CD4-positive, alpha-beta T cell (primary cell): ENCODE measurements at regions of chr12 and their contacts with region 1.

Region 1: DNA sequence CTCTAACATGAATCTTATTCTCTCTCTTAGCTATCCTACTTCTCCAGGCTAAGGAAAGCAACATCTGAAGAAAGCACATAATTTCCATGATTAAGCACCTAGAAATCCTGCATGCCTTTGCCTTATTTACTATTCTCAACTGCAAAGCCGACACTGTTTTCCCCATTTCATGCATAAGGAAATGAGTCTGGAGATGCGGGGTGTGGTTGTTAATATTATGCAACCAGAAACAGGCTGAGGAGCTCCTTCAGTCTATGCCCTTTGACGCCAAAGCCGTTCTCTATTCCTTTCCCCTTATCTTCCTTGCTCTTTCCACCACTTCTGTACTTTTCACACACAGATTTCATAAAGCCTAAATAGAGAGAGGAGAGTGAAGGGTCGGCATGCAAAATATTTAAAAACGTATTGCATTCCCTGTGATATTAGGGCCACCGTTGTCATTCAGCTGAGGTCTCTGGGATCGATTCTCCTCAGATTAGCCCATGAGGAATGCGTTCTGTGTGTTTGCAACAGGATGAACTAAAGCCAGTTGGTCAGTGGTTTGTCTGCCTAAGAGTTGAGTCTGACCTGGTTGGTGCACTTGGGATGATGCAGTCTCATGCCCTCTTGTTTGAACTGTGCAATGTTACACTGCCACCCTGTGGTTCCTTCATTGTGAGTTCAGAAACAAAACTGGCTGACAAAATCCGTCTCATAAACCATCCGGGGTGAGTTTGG is 53.1 kb upstream of the PLEKHG7 start:
- DNase-seq: peak; percentile 33 to 85 (median 50)
- ATAC-seq: peak; percentile 91
- H3K4me3 ChIP-seq: no peak overlapping the region
- H3K4me3 Mint-ChIP-seq: no peak overlapping the region
- H3K27ac ChIP-seq: no peak overlapping the region
- H3K27ac Mint-ChIP-seq: no peak overlapping the region
- H3K4me1 ChIP-seq: peaks cover 3% of the 10 kb centered on the region
- H3K4me1 Mint-ChIP-seq: no peaks in the 10 kb centered on the region
- H3K27me3 ChIP-seq: no peaks in the 10 kb centered on the region
- H3K27me3 Mint-ChIP-seq: no peaks in the 10 kb centered on the region
- CTCF ChIP-seq: peak; percentile 81

Region 2: DNA sequence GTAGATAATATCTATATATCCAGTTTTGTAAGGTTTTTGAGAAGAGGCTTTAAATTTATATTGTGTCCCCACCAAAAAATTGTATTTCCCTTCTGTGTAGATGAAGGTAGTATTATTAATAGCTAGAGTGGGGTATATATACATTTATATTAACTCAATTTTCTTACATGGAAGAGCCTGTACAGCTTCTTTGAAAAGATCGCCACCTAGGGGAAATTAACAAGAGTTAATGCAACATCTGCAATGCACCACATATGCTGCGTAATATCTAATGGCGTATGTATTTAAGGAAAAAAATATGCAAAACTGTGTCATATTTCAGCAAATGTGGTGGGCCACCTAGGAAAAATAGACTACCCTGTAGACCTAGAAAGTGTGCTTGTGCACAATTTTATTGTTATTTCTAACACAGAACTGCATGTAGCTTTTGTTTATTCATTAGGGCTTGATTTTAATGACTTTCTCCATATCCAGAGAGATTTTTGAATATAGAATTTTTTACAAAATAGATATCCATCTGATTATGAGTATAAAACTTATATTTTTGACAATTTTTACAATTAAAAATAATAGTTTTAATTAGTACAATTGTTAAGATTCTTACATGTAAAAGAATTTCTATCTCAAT is 1708.7 kb before region 1 on chr12:
- CTCF ChIA-PET with region 1: no interaction called
- POLR2A ChIA-PET with region 1: no interaction called
- intact Hi-C with region 1: loop called in 1 of 2 experiments (anchors 10 kb)
- DNase-seq: peak in 3 of 14 experiments; percentile 17 to 29 (median 22)
- ATAC-seq: no peak
- H3K4me3 ChIP-seq: no peak overlapping the region
- H3K4me3 Mint-ChIP-seq: no peak overlapping the region
- H3K27ac ChIP-seq: no peak overlapping the region
- H3K27ac Mint-ChIP-seq: no peak overlapping the region
- H3K4me1 ChIP-seq: no peaks in the 10 kb centered on the region
- H3K4me1 Mint-ChIP-seq: no peaks in the 10 kb centered on the region
- H3K27me3 ChIP-seq: peaks cover 0 to 2% of the 10 kb centered on the region in 2 experiments
- H3K27me3 Mint-ChIP-seq: peaks cover 8% of the 10 kb centered on the region
- CTCF ChIP-seq: peak; percentile 40

Region 3: DNA sequence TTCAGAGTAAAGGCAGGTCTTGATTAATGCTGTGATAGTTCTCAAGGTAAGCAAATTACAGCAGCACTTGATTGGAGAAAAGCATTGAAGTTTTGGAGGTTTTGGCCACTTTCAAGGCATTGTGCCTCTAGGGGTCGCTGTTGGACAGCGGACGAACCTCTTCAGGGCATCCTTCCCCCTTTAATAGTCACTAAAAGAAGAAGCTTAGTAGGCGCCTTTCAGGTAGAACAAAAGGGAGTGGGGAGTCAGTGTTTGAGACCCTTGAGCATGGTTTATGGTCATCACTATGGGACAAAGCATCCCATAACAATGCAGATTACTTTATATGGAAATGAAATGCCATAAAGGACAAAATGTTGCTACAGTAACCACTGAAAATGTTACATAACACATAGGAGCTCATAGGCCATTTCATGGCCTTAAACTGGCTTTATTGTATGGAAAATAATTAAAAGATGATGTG is 1267.6 kb before region 1 on chr12:
- CTCF ChIA-PET with region 1: interaction called, 17 read pairs
- POLR2A ChIA-PET with region 1: interaction called, 4 read pairs
- intact Hi-C with region 1: loop called (anchors 1 kb)
- DNase-seq: peak; percentile 77 to 94 (median 86)
- ATAC-seq: peak; percentile 89
- H3K4me3 ChIP-seq: peak overlapping the region; percentile 21
- H3K4me3 Mint-ChIP-seq: peak overlapping the region; percentile 81
- H3K27ac ChIP-seq: no peak overlapping the region
- H3K27ac Mint-ChIP-seq: peak overlapping the region; percentile 1
- H3K4me1 ChIP-seq: peaks cover 7% of the 10 kb centered on the region
- H3K4me1 Mint-ChIP-seq: peaks cover 5% of the 10 kb centered on the region
- H3K27me3 ChIP-seq: peaks cover 0 to 5% of the 10 kb centered on the region in 2 experiments
- H3K27me3 Mint-ChIP-seq: peaks cover 4% of the 10 kb centered on the region
- CTCF ChIP-seq: peak; percentile 90

Region 4: GRCh38 chr12:91753649-91754048 is 896.0 kb before region 1 on chr12:
- CTCF ChIA-PET with region 1: no interaction called
- POLR2A ChIA-PET with region 1: no interaction called
- intact Hi-C with region 1: loop called in 1 of 2 experiments (anchors 10 kb)
- DNase-seq: no peak
- ATAC-seq: no peak
- H3K4me3 ChIP-seq: no peak overlapping the region
- H3K4me3 Mint-ChIP-seq: no peak overlapping the region
- H3K27ac ChIP-seq: no peak overlapping the region
- H3K27ac Mint-ChIP-seq: no peak overlapping the region
- H3K4me1 ChIP-seq: no peaks in the 10 kb centered on the region
- H3K4me1 Mint-ChIP-seq: no peaks in the 10 kb centered on the region
- H3K27me3 ChIP-seq: no peaks in the 10 kb centered on the region
- H3K27me3 Mint-ChIP-seq: no peaks in the 10 kb centered on the region
- CTCF ChIP-seq: no peak

Region 5: GRCh38 chr12:92469837-92470236 is 179.8 kb before region 1 on chr12:
- CTCF ChIA-PET with region 1: no interaction called
- POLR2A ChIA-PET with region 1: no interaction called
- intact Hi-C with region 1: no loop called
- DNase-seq: no peak
- ATAC-seq: no peak
- H3K4me3 ChIP-seq: no peak overlapping the region
- H3K4me3 Mint-ChIP-seq: no peak overlapping the region
- H3K27ac ChIP-seq: no peak overlapping the region
- H3K27ac Mint-ChIP-seq: no peak overlapping the region
- H3K4me1 ChIP-seq: no peaks in the 10 kb centered on the region
- H3K4me1 Mint-ChIP-seq: peaks cover 8% of the 10 kb centered on the region
- H3K27me3 ChIP-seq: no peaks in the 10 kb centered on the region
- H3K27me3 Mint-ChIP-seq: no peaks in the 10 kb centered on the region
- CTCF ChIP-seq: no peak

Region 6: GRCh38 chr12:92593734-92594402 is 55.8 kb before region 1 on chr12:
- CTCF ChIA-PET with region 1: interaction called, 4 read pairs
- POLR2A ChIA-PET with region 1: no interaction called
- intact Hi-C with region 1: loop called in 1 of 2 experiments (anchors 5 kb)
- DNase-seq: peak; percentile 59 to 98 (median 72)
- ATAC-seq: peak; percentile 84
- H3K4me3 ChIP-seq: no peak overlapping the region
- H3K4me3 Mint-ChIP-seq: peak overlapping the region; percentile 28
- H3K27ac ChIP-seq: peak overlapping the region; percentile 96 to 97
- H3K27ac Mint-ChIP-seq: peak overlapping the region; percentile 91
- H3K4me1 ChIP-seq: peaks cover 31% of the 10 kb centered on the region
- H3K4me1 Mint-ChIP-seq: peaks cover 43% of the 10 kb centered on the region
- H3K27me3 ChIP-seq: no peaks in the 10 kb centered on the region
- H3K27me3 Mint-ChIP-seq: no peaks in the 10 kb centered on the region
- CTCF ChIP-seq: no peak